ENCODE measurements at regions of chr9 and their contacts with region 1.

Region 1: GRCh38 chr9:87324613-87325194 is 173.0 kb upstream of the DAPK1 start:
- DNase-seq: no peak
- ATAC-seq: peak; percentile 70 to 79
- H3K4me3 ChIP-seq: no peak overlapping the region
- H3K27ac ChIP-seq: no peak overlapping the region
- H3K4me1 ChIP-seq: no peaks in the 10 kb centered on the region
- H3K27me3 ChIP-seq: no peaks in the 10 kb centered on the region
- CTCF ChIP-seq: peak; percentile 70 to 84 (median 78)
- POLR2A ChIP-seq: no peak

Region 2: GRCh38 chr9:86413966-86414880 is 910.5 kb before region 1 on chr9:
- in situ Hi-C with region 1: loop called in 3 of 4 experiments (anchors 5 to 10 kb)
- intact Hi-C with region 1: loop called (anchors 5 kb)
- DNase-seq: no peak
- ATAC-seq: peak in 1 of 2 donors; percentile 50
- H3K4me3 ChIP-seq: no peak overlapping the region
- H3K27ac ChIP-seq: no peak overlapping the region
- H3K4me1 ChIP-seq: no peaks in the 10 kb centered on the region
- H3K27me3 ChIP-seq: no peaks in the 10 kb centered on the region
- CTCF ChIP-seq: peak; percentile 60 to 76 (median 72)
- POLR2A ChIP-seq: no peak

Region 3: GRCh38 chr9:86486891-86487837 is 837.5 kb before region 1 on chr9:
- in situ Hi-C with region 1: loop called (anchors 5 kb)
- intact Hi-C with region 1: loop called (anchors 2 kb)
- DNase-seq: no peak
- ATAC-seq: peak; percentile 70 to 84
- H3K4me3 ChIP-seq: no peak overlapping the region
- H3K27ac ChIP-seq: no peak overlapping the region
- H3K4me1 ChIP-seq: no peaks in the 10 kb centered on the region
- H3K27me3 ChIP-seq: no peaks in the 10 kb centered on the region
- CTCF ChIP-seq: peak; percentile 52 to 67 (median 59)
- POLR2A ChIP-seq: no peak

Region 4: DNA sequence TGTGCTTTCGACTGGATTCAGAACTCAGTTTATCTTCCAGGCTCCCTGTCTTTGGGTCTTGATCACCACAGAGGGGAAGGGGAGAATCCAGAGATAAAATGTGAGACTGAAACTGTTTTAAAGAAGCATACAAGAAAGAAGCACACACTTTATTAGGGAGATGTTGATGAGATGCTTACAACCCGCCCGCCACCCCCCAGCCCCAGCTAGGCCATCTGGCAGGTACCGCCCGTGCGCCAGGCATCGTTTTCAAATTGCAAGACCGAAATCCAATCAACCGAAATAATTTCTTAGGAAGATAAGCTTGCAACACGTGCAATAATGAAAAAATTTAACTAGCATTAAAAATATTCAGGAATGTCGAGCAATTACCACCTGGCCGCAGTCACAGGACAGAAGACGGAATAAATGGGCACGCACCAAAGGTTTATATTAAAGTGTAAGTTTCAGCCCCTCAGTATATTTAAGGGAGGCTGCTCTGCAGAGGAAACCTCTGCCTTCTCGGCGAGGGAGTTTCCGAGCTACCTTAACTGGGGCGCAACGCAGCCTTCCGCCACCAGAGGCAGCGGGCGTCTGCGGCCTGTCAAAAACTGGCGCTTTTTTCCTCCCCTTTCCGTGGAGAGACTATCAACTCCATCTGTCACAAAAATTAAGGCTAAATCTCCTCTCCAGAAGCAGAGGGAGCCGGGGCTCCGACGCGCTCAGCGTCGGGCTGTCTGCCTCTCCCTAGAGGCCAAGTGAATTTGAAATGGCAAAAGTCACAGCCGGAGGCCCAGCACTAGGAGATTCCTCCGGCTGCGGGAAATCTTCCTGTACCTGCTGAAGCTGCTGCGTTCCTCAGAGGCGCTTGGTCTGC is 376.4 kb before region 1 on chr9:
- in situ Hi-C with region 1: loop called in 1 of 4 experiments (anchors 25 kb)
- intact Hi-C with region 1: loop called (anchors 10 kb)
- DNase-seq: peak; percentile 56 to 64
- ATAC-seq: peak; percentile 58 to 63
- H3K4me3 ChIP-seq: peak overlapping the region; percentile 77 to 96 (median 80)
- H3K27ac ChIP-seq: peak overlapping the region; percentile 80 to 92 (median 84)
- H3K4me1 ChIP-seq: peaks cover 16 to 18% of the 10 kb centered on the region in 2 donors
- H3K27me3 ChIP-seq: peaks cover 5 to 11% (median 7%) of the 10 kb centered on the region in 3 donors
- CTCF ChIP-seq: peak; percentile 74 to 93 (median 82)
- POLR2A ChIP-seq: no peak

Region 5: GRCh38 chr9:86974421-86974820 is 350.3 kb before region 1 on chr9:
- in situ Hi-C with region 1: loop called in 1 of 4 experiments (anchors 25 kb)
- intact Hi-C with region 1: loop called (anchors 1 kb)
- DNase-seq: no peak
- ATAC-seq: no peak
- H3K4me3 ChIP-seq: no peak overlapping the region
- H3K27ac ChIP-seq: no peak overlapping the region
- H3K4me1 ChIP-seq: no peaks in the 10 kb centered on the region
- H3K27me3 ChIP-seq: no peaks in the 10 kb centered on the region
- CTCF ChIP-seq: peak in 1 of 5 experiments; percentile 12
- POLR2A ChIP-seq: no peak

Region 6: GRCh38 chr9:87375397-87376073 is 50.8 kb after region 1 on chr9:
- in situ Hi-C with region 1: no loop called
- intact Hi-C with region 1: no loop called
- DNase-seq: no peak
- ATAC-seq: no peak
- H3K4me3 ChIP-seq: no peak overlapping the region
- H3K27ac ChIP-seq: no peak overlapping the region
- H3K4me1 ChIP-seq: no peaks in the 10 kb centered on the region
- H3K27me3 ChIP-seq: no peaks in the 10 kb centered on the region
- CTCF ChIP-seq: no peak
- POLR2A ChIP-seq: no peak

Measured in gastrocnemius medialis (tissue), 4 donors.